ENCODE measurements at regions of chr1 and their contacts with region 1.

Region 1: DNA sequence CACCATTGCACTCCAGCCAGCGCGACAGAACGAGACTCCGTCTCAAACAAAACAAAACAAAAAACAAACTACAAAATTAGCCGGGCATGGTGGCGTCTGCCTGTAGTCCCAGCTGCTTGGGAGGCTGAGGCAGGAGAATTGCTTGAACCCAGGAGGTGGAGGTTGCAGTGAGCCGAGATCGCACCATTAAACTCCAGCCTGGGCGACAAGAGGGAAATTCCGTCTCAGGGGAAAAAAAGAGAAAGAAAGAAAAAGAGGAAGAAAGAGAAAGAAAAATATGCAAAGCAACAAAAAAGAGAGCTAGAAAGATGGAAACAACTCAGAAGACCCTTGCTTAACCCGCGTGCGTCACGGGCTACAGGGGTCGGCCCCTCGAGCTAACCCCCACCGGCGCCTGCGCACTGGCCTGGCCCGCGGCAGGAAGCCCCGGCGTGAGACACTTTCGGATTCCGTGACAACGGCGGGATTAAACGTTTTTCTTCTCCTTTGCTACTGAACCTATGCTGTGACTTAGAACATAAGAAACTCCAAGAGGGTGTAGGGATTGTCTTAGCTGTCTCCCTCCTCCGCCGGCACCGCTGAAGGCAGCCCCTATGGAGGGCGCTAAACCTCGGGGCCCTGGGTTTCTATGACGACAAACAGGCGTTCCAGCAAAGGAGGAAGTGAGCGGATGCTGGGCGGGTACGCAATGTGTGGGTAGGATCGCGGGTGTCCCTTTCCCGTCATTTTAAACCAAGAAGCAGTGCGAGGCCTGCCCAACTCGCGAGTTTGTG is at the start of gene AXDND1:
- DNase-seq: peak; percentile 87
- H3K4me3 Mint-ChIP-seq: peak within 1 kb of the TSS; percentile 95
- H3K27ac Mint-ChIP-seq: peak within 1 kb of the TSS; percentile 100
- H3K4me1 Mint-ChIP-seq: peaks cover 12% of the 10 kb centered on the region
- H3K27me3 Mint-ChIP-seq: no peaks in the 10 kb centered on the region
- total RNA-seq, gene AXDND1: not detected in 2 replicates

Region 2: GRCh38 chr1:178768423-178768822 is 597.1 kb before region 1 on chr1:
- intact Hi-C with region 1: loop called (anchors 1 kb)
- DNase-seq: no peak
- H3K4me3 Mint-ChIP-seq: no peak overlapping the region
- H3K27ac Mint-ChIP-seq: no peak overlapping the region
- H3K4me1 Mint-ChIP-seq: no peaks in the 10 kb centered on the region
- H3K27me3 Mint-ChIP-seq: peaks cover 2% of the 10 kb centered on the region

Region 3: GRCh38 chr1:179081687-179082332 is 283.7 kb before region 1 on chr1 and contains the start of gene TOR3A:
- intact Hi-C with region 1: loop called (anchors 1 kb)
- DNase-seq: peak; percentile 77
- H3K4me3 Mint-ChIP-seq: peak within 1 kb of the TSS; percentile 99
- H3K27ac Mint-ChIP-seq: peak within 1 kb of the TSS; percentile 99
- H3K4me1 Mint-ChIP-seq: peaks cover 37% of the 10 kb centered on the region
- H3K27me3 Mint-ChIP-seq: no peaks in the 10 kb centered on the region
- total RNA-seq, gene TOR3A: 41.3 and 44.1 TPM in 2 replicates

Region 4: DNA sequence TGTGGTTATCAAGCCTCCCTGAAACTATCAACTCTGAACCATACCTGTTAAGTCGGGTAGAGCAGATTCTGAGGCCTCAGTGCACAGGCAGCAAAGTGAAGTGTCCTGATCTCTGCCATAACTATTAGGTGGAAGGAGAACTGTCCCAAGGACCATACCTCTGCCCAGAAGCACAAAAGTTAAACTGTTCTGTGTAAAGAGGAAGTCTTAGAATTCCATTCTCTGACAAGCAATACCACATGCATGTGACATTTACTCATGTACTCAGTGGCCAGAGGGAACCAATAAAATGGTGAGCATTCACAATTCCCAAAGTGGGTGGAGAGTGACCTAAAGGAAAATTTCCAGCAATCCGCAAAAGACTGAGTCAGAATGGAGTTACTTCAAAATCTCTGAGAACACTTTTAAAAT is 222.6 kb before region 1 on chr1:
- intact Hi-C with region 1: loop called (anchors 2 kb)
- DNase-seq: no peak
- H3K4me3 Mint-ChIP-seq: peak overlapping the region; percentile 63
- H3K27ac Mint-ChIP-seq: no peak overlapping the region
- H3K4me1 Mint-ChIP-seq: peaks cover 31% of the 10 kb centered on the region
- H3K27me3 Mint-ChIP-seq: no peaks in the 10 kb centered on the region

Region 5: GRCh38 chr1:179251675-179252074 is 113.8 kb before region 1 on chr1:
- intact Hi-C with region 1: loop called (anchors 1 kb)
- DNase-seq: no peak
- H3K4me3 Mint-ChIP-seq: no peak overlapping the region
- H3K27ac Mint-ChIP-seq: no peak overlapping the region
- H3K4me1 Mint-ChIP-seq: no peaks in the 10 kb centered on the region
- H3K27me3 Mint-ChIP-seq: no peaks in the 10 kb centered on the region

Region 6: GRCh38 chr1:179809506-179810366 is 444.2 kb after region 1 on chr1:
- intact Hi-C with region 1: loop called (anchors 10 kb)
- DNase-seq: peak; percentile 43
- H3K4me3 Mint-ChIP-seq: no peak overlapping the region
- H3K27ac Mint-ChIP-seq: no peak overlapping the region
- H3K4me1 Mint-ChIP-seq: peaks cover 11% of the 10 kb centered on the region
- H3K27me3 Mint-ChIP-seq: peaks cover 6% of the 10 kb centered on the region

Measured in activated T-helper 1 cell treated with anti-CD3 and anti-CD28 coated beads, Interleukin-12 subunit alpha, Interleukin-12 subunit beta, Interleukin-2, Interleukin-4 antibody, amounts not matched to agents 30 ng/mL and 10 ng/mL and 1 ng/mL, durations not matched to agents 14 hours and 24 hours and 36 hours (primary cell).